AG04450 (cell line): ENCODE measurements at regions of chrX and their contacts with region 1.

Region 1: DNA sequence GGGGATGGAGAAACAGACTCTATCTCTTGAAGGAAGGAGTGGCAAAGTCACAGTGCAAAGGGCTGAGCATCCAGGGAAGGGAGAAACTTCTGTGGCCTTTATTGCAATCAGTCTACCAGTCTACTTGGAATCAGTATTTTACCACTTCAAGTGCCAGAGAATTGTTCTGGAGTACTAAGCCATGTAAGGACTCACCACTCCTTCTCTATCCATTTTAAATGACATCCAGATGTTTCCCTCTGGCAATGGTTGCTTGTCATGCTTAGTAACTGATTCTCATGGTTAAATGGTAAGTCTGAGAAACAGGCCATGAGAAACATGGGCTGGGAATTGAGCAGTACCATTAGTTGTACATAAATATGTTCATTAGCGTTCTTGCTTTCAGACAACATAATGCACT is 21.1 kb upstream of the SMIM10 start:
- DNase-seq: no peak
- H3K4me3 ChIP-seq: no peak overlapping the region
- H3K27ac ChIP-seq: no peak overlapping the region
- H3K27me3 ChIP-seq: no peaks in the 10 kb centered on the region
- CTCF ChIP-seq: no peak

Region 2: GRCh38 chrX:135086197-135086854 is 116.6 kb after region 1 on chrX:
- CTCF ChIA-PET with region 1: interaction called, 12 read pairs
- POLR2A ChIA-PET with region 1: no interaction called
- DNase-seq: peak; percentile 23
- H3K4me3 ChIP-seq: no peak overlapping the region
- H3K27ac ChIP-seq: no peak overlapping the region
- H3K27me3 ChIP-seq: no peaks in the 10 kb centered on the region
- CTCF ChIP-seq: peak; percentile 63